Activated CD4-positive, alpha-beta memory T cell treated with anti-CD3 and anti-CD28 coated beads for 36 hours (primary cell): ENCODE measurements at regions of chr1 and their contacts with region 1.

Region 1: GRCh38 chr1:21294266-21294989 is 4.2 kb upstream of the ECE1 start:
- DNase-seq: peak; percentile 95
- H3K4me3 Mint-ChIP-seq: peak overlapping the region; percentile 75
- H3K27ac Mint-ChIP-seq: peak overlapping the region; percentile 99
- H3K4me1 Mint-ChIP-seq: peaks cover 82% of the 10 kb centered on the region
- H3K27me3 Mint-ChIP-seq: no peaks in the 10 kb centered on the region

Region 2: GRCh38 chr1:20661207-20662109 is 633.0 kb before region 1 on chr1 and contains the start of gene DDOST:
- CTCF ChIA-PET with region 1: no interaction called
- POLR2A ChIA-PET with region 1: no interaction called
- intact Hi-C with region 1: loop called (anchors 5 kb)
- DNase-seq: peak; percentile 98
- H3K4me3 Mint-ChIP-seq: peak within 1 kb of the TSS; percentile 100
- H3K27ac Mint-ChIP-seq: peak within 1 kb of the TSS; percentile 98
- H3K4me1 Mint-ChIP-seq: peaks cover 46% of the 10 kb centered on the region
- H3K27me3 Mint-ChIP-seq: no peaks in the 10 kb centered on the region
- total RNA-seq, gene DDOST: 165 to 180 TPM

Region 3: GRCh38 chr1:20847611-20848080 is 446.8 kb before region 1 on chr1:
- CTCF ChIA-PET with region 1: no interaction called
- POLR2A ChIA-PET with region 1: no interaction called
- intact Hi-C with region 1: no loop called
- DNase-seq: no peak
- H3K4me3 Mint-ChIP-seq: no peak overlapping the region
- H3K27ac Mint-ChIP-seq: no peak overlapping the region
- H3K4me1 Mint-ChIP-seq: no peaks in the 10 kb centered on the region
- H3K27me3 Mint-ChIP-seq: no peaks in the 10 kb centered on the region

Region 4: GRCh38 chr1:21255278-21255942 is 39.0 kb before region 1 on chr1:
- CTCF ChIA-PET with region 1: interaction called, 11 read pairs
- POLR2A ChIA-PET with region 1: interaction called, 5 read pairs
- intact Hi-C with region 1: loop called (anchors 1 kb)
- DNase-seq: peak; percentile 88
- H3K4me3 Mint-ChIP-seq: no peak overlapping the region
- H3K27ac Mint-ChIP-seq: peak overlapping the region; percentile 59
- H3K4me1 Mint-ChIP-seq: peaks cover 48% of the 10 kb centered on the region
- H3K27me3 Mint-ChIP-seq: no peaks in the 10 kb centered on the region

Region 5: DNA sequence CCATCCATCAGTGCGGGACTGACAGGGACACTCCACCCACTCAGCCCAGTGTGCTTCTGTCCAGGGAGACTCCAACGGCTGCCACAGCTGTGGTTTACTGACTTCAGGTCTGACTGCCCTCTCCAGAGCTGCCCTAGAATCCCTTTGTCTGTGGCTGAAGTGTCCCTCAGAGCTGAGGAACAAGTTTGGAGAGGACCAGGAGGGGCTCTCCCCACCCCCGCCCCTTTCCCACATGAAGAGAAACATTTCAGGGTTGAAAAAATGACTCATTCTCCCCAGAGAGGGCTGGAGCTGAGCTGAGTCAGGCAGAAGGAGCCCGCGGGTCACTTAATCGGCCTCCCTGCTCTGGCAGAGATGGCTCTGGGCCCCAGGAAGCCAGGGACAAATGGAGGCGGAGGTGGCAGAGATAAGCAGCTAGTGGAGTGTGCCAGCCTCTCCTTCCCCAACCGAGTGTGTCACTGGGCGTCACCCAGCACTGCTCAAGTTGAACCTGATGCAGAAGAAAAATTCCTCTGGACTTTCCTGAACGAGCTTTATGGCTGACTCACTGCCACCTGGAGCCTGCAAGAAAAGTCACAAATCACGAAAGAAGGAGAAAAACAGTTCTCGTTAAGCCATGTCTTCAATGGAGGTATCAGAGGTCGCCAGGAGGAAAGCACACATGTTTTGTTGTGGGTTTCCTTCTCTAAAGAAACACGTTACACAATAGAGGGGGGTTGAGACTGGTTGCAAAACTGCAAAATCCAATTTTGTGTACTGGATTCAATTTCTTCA is 30.1 kb after region 1 on chr1:
- CTCF ChIA-PET with region 1: interaction called, 30 read pairs
- POLR2A ChIA-PET with region 1: interaction called, 84 read pairs
- intact Hi-C with region 1: loop called (anchors 1 kb)
- DNase-seq: peak; percentile 90
- H3K4me3 Mint-ChIP-seq: peak overlapping the region; percentile 45
- H3K27ac Mint-ChIP-seq: peak overlapping the region; percentile 90
- H3K4me1 Mint-ChIP-seq: peaks cover 81% of the 10 kb centered on the region
- H3K27me3 Mint-ChIP-seq: no peaks in the 10 kb centered on the region

Region 6: GRCh38 chr1:21368515-21369289 is 74.3 kb after region 1 on chr1:
- CTCF ChIA-PET with region 1: interaction called, 17 read pairs
- POLR2A ChIA-PET with region 1: no interaction called
- intact Hi-C with region 1: no loop called
- DNase-seq: peak; percentile 69
- H3K4me3 Mint-ChIP-seq: peak overlapping the region; percentile 2
- H3K27ac Mint-ChIP-seq: peak overlapping the region; percentile 10
- H3K4me1 Mint-ChIP-seq: peaks cover 10% of the 10 kb centered on the region
- H3K27me3 Mint-ChIP-seq: no peaks in the 10 kb centered on the region

Region 7: GRCh38 chr1:21573971-21574465 is 279.6 kb after region 1 on chr1:
- CTCF ChIA-PET with region 1: no interaction called
- POLR2A ChIA-PET with region 1: no interaction called
- intact Hi-C with region 1: no loop called
- DNase-seq: peak; percentile 55
- H3K4me3 Mint-ChIP-seq: no peak overlapping the region
- H3K27ac Mint-ChIP-seq: no peak overlapping the region
- H3K4me1 Mint-ChIP-seq: no peaks in the 10 kb centered on the region
- H3K27me3 Mint-ChIP-seq: peaks cover 8% of the 10 kb centered on the region

Region 8: GRCh38 chr1:22052115-22053016 is 757.9 kb after region 1 on chr1 and contains the start of gene CDC42:
- CTCF ChIA-PET with region 1: no interaction called
- POLR2A ChIA-PET with region 1: no interaction called
- intact Hi-C with region 1: loop called (anchors 5 kb)
- DNase-seq: peak; percentile 98
- H3K4me3 Mint-ChIP-seq: peak within 1 kb of the TSS; percentile 98
- H3K27ac Mint-ChIP-seq: peak within 1 kb of the TSS; percentile 99
- H3K4me1 Mint-ChIP-seq: peaks cover 53% of the 10 kb centered on the region
- H3K27me3 Mint-ChIP-seq: no peaks in the 10 kb centered on the region
- total RNA-seq, gene CDC42: 310 to 314 TPM